H1 (cell line): ENCODE measurements at regions of chr15 and their contacts with region 1.

Region 1: GRCh38 chr15:73633111-73633990 is at the start of gene NPTN:
- DNase-seq: peak; percentile 94 to 98
- H3K4me3 ChIP-seq: peak within 1 kb of the TSS; percentile 70 to 96 (median 87)
- H3K27ac ChIP-seq: peak within 1 kb of the TSS; percentile 52; the same call in 1 of the 2 replicates
- H3K4me1 ChIP-seq: peaks cover 0 to 13% (median 7%) of the 10 kb centered on the region in 4 experiments; a peak in 4 of 7 replicates
- H3K27me3 ChIP-seq: no peaks in the 10 kb centered on the region; a peak in 1 of 7 replicates
- CTCF ChIP-seq: peak in 1 of 3 experiments; percentile 6; a peak in 1 of 4 replicates
- EP300 ChIP-seq: no peak
- POLR2A ChIP-seq: peak; percentile 84 to 94
- RAD21 ChIP-seq: no peak
- total RNA-seq, gene NPTN: 113 TPM in 2 replicates

Region 2: DNA sequence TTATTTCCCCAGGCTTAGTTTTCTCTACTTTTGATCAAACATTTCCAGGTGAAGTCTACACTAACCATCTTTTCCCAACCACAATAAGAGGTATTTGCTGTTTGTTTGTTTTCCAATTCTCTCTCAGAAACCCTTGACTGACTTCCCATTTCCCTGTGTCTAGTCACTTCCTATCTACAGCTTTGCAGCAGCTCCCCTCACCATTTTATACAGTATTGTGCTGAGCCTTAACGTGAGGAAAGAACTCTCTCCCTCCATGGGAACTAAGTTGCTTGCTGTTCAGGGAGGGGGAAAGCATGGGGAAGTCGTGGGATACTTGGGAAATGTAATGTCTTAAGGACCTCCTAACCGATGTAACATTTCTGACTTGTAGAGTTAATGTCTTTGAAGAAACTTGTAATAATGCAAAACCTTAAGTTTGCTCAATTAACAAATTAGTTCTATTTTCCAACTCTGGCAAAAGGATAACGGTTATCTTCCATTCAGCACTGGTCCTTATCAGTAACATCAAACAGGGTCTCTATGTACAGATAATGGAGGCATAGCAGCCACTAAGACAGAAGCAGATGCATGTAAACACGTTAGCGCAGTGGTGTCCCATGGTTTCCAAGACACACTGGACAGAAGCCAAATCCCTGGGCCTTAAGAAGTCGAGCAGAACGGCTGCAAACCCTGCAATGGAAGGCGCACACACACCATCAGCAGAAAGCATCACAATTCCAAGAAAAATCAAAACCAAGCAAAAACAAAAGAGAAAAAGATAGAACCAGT is 39.9 kb before region 1 on chr15:
- CTCF ChIA-PET with region 1: interaction called, 26 read pairs
- POLR2A ChIA-PET with region 1: no interaction called
- DNase-seq: no peak
- H3K4me3 ChIP-seq: no peak overlapping the region
- H3K27ac ChIP-seq: no peak overlapping the region
- H3K4me1 ChIP-seq: peaks cover 3 to 10% (median 8%) of the 10 kb centered on the region in 4 experiments
- H3K27me3 ChIP-seq: no peaks in the 10 kb centered on the region
- CTCF ChIP-seq: no peak
- EP300 ChIP-seq: no peak
- POLR2A ChIP-seq: no peak
- RAD21 ChIP-seq: no peak

Region 3: DNA sequence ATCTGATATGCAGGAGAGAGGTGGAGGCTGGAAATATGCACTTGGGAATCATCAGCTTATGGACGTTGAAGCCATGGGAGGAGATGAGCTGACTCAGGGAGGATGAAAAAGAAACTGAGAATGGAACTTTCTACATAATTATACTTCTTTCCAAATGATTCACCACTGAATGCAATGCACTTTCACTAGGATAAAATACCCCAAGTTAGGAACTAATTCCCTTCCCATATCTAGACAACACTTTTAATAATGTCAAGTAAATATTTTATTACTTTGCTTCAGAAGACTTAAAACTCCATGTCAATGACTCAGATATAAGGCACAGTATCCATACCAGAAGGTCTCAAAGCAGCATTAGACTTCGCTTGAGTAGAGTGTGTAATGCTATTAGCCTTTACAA is 24.4 kb before region 1 on chr15:
- CTCF ChIA-PET with region 1: interaction called, 22 read pairs
- POLR2A ChIA-PET with region 1: interaction called, 115 read pairs
- DNase-seq: no peak
- H3K4me3 ChIP-seq: no peak overlapping the region
- H3K27ac ChIP-seq: no peak overlapping the region
- H3K4me1 ChIP-seq: peaks cover 2 to 7% (median 6%) of the 10 kb centered on the region in 4 experiments; a peak in 5 of 7 replicates
- H3K27me3 ChIP-seq: no peaks in the 10 kb centered on the region
- CTCF ChIP-seq: no peak
- EP300 ChIP-seq: no peak
- POLR2A ChIP-seq: no peak
- RAD21 ChIP-seq: no peak

Region 4: DNA sequence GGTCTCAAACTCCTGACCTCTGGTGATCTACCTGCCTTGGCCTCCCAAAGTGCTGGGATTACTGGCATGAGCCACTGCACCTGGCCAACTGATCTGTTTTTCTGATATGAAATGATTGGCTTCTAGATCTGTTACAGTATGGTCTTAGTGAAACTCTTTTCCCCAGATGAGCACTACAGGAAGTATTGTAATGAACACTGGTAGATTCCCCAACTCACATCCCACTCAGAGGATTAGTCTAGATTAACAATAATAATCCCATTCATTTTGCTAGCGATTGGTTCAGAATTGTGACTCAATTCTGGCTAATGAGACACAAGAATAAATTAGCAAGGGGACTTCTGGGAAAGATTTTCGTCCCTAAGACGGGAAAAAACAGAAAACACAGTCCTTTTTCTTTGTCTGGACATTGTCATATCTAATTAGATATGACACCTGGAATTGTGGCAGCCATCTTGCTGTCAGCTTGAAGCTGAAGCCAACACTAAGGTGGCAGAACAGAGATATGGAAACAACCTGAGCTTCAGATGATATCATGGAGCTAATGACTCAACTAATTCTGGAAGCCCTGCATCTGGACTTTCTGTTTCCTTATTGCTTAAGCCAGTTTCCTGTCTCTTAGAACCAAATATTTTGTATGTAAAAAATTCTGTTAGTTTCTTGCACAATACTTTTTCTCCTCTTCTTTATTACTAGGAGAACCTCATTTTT is 17.2 kb after region 1 on chr15:
- CTCF ChIA-PET with region 1: interaction called, 46 read pairs
- POLR2A ChIA-PET with region 1: interaction called, 3 read pairs
- DNase-seq: no peak
- H3K4me3 ChIP-seq: no peak overlapping the region
- H3K27ac ChIP-seq: no peak overlapping the region
- H3K4me1 ChIP-seq: no peaks in the 10 kb centered on the region
- H3K27me3 ChIP-seq: no peaks in the 10 kb centered on the region
- CTCF ChIP-seq: no peak
- EP300 ChIP-seq: no peak
- POLR2A ChIP-seq: no peak
- RAD21 ChIP-seq: no peak

Region 5: GRCh38 chr15:73683777-73684580 is 50.6 kb after region 1 on chr15 and contains the start of gene CD276:
- CTCF ChIA-PET with region 1: interaction called, 72 read pairs
- POLR2A ChIA-PET with region 1: interaction called, 12 read pairs
- DNase-seq: peak in 1 of 2 experiments; percentile 80
- H3K4me3 ChIP-seq: peak within 1 kb of the TSS; percentile 80 to 95 (median 86)
- H3K27ac ChIP-seq: peak within 1 kb of the TSS; percentile 77
- H3K4me1 ChIP-seq: peaks cover 2 to 22% (median 10%) of the 10 kb centered on the region in 4 experiments; a peak in 4 of 7 replicates
- H3K27me3 ChIP-seq: no peaks in the 10 kb centered on the region
- CTCF ChIP-seq: peak in 1 of 3 experiments; percentile 42; a peak in 1 of 4 replicates
- EP300 ChIP-seq: no peak
- POLR2A ChIP-seq: peak; percentile 29 to 41; a peak in 2 of 3 replicates
- RAD21 ChIP-seq: no peak; a peak in 1 of 4 replicates
- total RNA-seq, gene CD276: 152 and 156 TPM in 2 replicates

Region 6: DNA sequence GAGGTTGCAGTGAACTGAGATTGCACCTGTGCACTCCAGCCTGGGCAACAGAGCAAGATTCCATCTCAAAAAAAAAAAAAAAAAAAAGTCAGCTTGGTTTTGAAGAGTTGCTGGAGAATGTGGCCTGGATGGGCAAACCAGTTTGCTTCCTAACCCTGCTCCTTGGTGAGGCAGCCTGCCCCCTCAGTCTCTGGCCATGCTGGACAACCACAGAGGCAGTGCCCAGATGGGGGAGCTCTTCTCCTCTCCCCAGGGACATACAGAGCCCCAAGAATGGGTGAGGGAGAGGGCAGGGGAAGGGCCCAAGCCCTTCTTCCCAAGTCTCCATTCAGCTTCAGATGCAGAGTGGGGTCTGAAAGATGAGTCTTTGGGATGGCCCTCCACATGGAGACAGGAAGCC is 78.7 kb after region 1 on chr15:
- CTCF ChIA-PET with region 1: interaction called, 448 read pairs
- POLR2A ChIA-PET with region 1: interaction called, 3 read pairs
- DNase-seq: no peak
- H3K4me3 ChIP-seq: no peak overlapping the region
- H3K27ac ChIP-seq: no peak overlapping the region
- H3K4me1 ChIP-seq: no peaks in the 10 kb centered on the region
- H3K27me3 ChIP-seq: no peaks in the 10 kb centered on the region
- CTCF ChIP-seq: peak; percentile 61 to 76 (median 70)
- EP300 ChIP-seq: no peak
- POLR2A ChIP-seq: no peak
- RAD21 ChIP-seq: peak; percentile 65 to 77